ENCODE measurements at regions of chr16 and their contacts with region 1.

Region 1: GRCh38 chr16:58629572-58630104 is at the start of gene CNOT1:
- DNase-seq: peak; percentile 99
- ATAC-seq: peak; percentile 89
- H3K4me3 Mint-ChIP-seq: peak within 1 kb of the TSS; percentile 100
- H3K27ac Mint-ChIP-seq: peak within 1 kb of the TSS; percentile 100
- H3K4me1 Mint-ChIP-seq: peaks cover 27% of the 10 kb centered on the region
- H3K27me3 Mint-ChIP-seq: no peaks in the 10 kb centered on the region
- total RNA-seq, gene CNOT1: 265 to 348 TPM

Region 2: GRCh38 chr16:58198022-58198683 is 431.5 kb before region 1 on chr16 and contains the start of gene CSNK2A2:
- CTCF ChIA-PET with region 1: no interaction called
- POLR2A ChIA-PET with region 1: no interaction called
- intact Hi-C with region 1: loop called in 1 of 2 experiments (anchors 1 kb)
- DNase-seq: peak; percentile 84
- ATAC-seq: peak; percentile 94
- H3K4me3 Mint-ChIP-seq: peak within 1 kb of the TSS; percentile 84
- H3K27ac Mint-ChIP-seq: peak within 1 kb of the TSS; percentile 74
- H3K4me1 Mint-ChIP-seq: peaks cover 34% of the 10 kb centered on the region
- H3K27me3 Mint-ChIP-seq: peaks cover 6% of the 10 kb centered on the region
- total RNA-seq, gene CSNK2A2: 85.9 to 92.2 TPM

Region 3: DNA sequence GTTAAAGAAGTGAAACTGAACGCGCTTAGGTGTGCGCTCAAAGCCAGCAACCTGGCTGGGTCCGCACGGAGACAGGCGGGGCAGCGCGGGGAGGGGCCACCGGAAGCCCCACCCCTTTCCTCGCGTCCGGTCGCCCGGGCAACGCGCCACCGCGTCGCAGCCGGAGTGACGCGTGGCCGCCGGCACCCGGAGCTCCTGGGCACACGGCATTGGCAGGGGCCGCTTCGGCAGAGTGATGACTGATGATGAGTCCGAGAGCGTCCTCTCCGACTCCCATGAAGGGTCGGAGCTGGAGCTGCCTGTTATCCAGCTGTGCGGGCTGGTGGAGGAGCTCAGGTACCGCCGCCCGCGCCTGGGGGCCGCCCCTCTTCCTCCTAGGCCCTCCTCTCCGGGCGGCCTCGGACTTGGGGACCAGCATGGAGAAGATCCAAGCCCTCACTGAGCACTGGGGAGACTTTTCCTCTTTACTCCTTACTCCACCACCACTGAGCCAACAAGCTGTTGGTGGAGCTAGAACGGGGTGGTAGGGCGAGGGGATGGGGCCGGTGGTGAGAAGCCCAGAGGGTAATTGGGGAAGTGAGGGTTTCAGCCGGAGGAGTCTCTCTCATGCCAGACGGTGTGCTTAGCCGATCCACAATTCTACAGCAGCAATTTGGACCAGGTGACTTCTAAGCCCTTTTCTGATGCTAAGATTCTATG is 379.7 kb before region 1 on chr16:
- CTCF ChIA-PET with region 1: no interaction called
- POLR2A ChIA-PET with region 1: no interaction called
- intact Hi-C with region 1: loop called in 1 of 2 experiments (anchors 1 kb)
- DNase-seq: peak; percentile 92
- ATAC-seq: peak; percentile 98
- H3K4me3 Mint-ChIP-seq: peak overlapping the region; percentile 81
- H3K27ac Mint-ChIP-seq: peak overlapping the region; percentile 85
- H3K4me1 Mint-ChIP-seq: peaks cover 8% of the 10 kb centered on the region
- H3K27me3 Mint-ChIP-seq: no peaks in the 10 kb centered on the region

Region 4: GRCh38 chr16:58733671-58734458 is 104.2 kb after region 1 on chr16 and contains the start of gene GOT2:
- CTCF ChIA-PET with region 1: no interaction called
- POLR2A ChIA-PET with region 1: no interaction called
- intact Hi-C with region 1: loop called (anchors 1 kb)
- DNase-seq: peak; percentile 90
- ATAC-seq: peak; percentile 92
- H3K4me3 Mint-ChIP-seq: peak within 1 kb of the TSS; percentile 92
- H3K27ac Mint-ChIP-seq: peak within 1 kb of the TSS; percentile 97
- H3K4me1 Mint-ChIP-seq: peaks cover 42% of the 10 kb centered on the region
- H3K27me3 Mint-ChIP-seq: no peaks in the 10 kb centered on the region
- total RNA-seq, gene GOT2: 128 to 133 TPM

Measured in activated CD4-positive, alpha-beta T cell treated with anti-CD3 and anti-CD28 coated beads for 36 hours (primary cell).